Mammary epithelial cell (primary cell): ENCODE measurements at regions of chr4 and their contacts with region 1.

Region 1: DNA sequence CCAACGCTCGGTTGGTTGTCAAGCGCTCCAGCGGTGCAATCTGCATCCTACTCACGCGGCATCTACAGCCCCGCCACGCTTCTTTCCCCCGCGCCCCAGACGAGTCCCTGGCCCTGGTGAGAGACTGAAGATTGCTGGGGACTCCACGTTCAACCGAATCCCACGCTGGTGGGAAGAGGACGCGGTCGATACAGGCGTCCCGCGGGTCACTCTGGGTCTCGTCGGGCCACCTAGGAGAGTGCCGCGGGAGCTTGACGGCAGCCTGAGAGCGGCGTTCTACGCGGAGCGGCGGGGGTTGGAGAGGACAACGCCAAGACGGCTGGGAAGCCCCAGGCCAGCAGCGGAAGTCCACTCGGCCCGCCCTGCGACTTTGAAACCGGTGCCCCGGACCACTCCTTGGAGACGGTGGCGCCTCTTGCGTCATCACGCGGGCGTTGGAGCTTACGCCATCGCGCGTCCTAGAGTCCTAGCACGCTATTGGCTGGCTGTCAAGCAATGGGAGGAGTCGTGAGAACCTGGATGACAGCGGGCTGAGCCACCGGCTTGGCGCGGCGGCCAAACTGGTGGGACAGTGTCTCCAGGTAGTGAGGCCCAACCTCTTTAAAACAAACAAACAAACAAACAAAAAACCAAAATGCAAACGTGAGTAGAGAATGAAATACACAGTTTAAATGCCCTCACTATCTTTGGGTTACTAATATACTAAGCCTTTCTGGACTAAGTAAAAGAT is at the start of gene SCLT1:
- DNase-seq: peak; percentile 98
- H3K4me3 ChIP-seq: peak within 1 kb of the TSS; percentile 51 to 77 (median 69)
- H3K27ac ChIP-seq: peak within 1 kb of the TSS; percentile 82
- H3K4me1 ChIP-seq: peaks cover 19% of the 10 kb centered on the region
- H3K27me3 ChIP-seq: no peaks in the 10 kb centered on the region
- CTCF ChIP-seq: no peak
- total RNA-seq, gene SCLT1: 7.2 to 13.3 TPM

Region 2: GRCh38 chr4:128986019-128986418 is 107.3 kb before region 1 on chr4:
- CTCF ChIA-PET with region 1: no interaction called
- dilution Hi-C with region 1: no loop called
- in situ Hi-C with region 1: no loop called
- intact Hi-C with region 1: loop called (anchors 5 kb)
- DNase-seq: no peak
- H3K4me3 ChIP-seq: no peak overlapping the region
- H3K27ac ChIP-seq: no peak overlapping the region
- H3K4me1 ChIP-seq: no peaks in the 10 kb centered on the region
- H3K27me3 ChIP-seq: no peaks in the 10 kb centered on the region
- CTCF ChIP-seq: no peak

Region 3: DNA sequence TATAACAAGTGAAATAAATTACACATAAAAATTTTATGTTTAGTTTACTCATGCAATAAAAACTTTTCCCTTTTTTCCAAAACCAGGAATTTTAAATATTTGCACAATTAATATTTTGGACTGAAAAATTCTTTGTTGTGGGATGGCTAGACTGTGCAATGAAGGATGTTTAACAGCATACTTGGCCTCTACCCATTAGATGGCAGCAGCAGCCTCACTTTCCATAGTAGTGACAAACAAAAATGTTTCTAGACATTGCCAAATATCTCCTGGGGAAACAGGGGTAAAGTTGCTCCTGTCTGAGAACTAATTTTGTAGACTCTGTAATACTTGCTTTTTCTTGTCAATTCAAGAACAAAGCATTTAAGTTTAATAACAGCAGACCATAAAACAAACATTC is 49.8 kb before region 1 on chr4:
- CTCF ChIA-PET with region 1: no interaction called
- dilution Hi-C with region 1: no loop called
- in situ Hi-C with region 1: no loop called
- intact Hi-C with region 1: loop called (anchors 2 kb)
- DNase-seq: no peak
- H3K4me3 ChIP-seq: no peak overlapping the region
- H3K27ac ChIP-seq: no peak overlapping the region
- H3K4me1 ChIP-seq: no peaks in the 10 kb centered on the region
- H3K27me3 ChIP-seq: no peaks in the 10 kb centered on the region
- CTCF ChIP-seq: peak in 1 of 2 donors; percentile 42

Region 4: GRCh38 chr4:129344058-129344457 is 250.7 kb after region 1 on chr4:
- CTCF ChIA-PET with region 1: no interaction called
- dilution Hi-C with region 1: no loop called
- in situ Hi-C with region 1: no loop called
- intact Hi-C with region 1: loop called (anchors 2 kb)
- DNase-seq: peak; percentile 40
- H3K4me3 ChIP-seq: no peak overlapping the region
- H3K27ac ChIP-seq: no peak overlapping the region
- H3K4me1 ChIP-seq: peaks cover 8% of the 10 kb centered on the region
- H3K27me3 ChIP-seq: no peaks in the 10 kb centered on the region
- CTCF ChIP-seq: peak; percentile 67 to 74